Activated CD4-positive, alpha-beta T cell treated with anti-CD3 and anti-CD28 coated beads for 36 hours (primary cell): ENCODE measurements at regions of chrX and their contacts with region 1.

Region 1: DNA sequence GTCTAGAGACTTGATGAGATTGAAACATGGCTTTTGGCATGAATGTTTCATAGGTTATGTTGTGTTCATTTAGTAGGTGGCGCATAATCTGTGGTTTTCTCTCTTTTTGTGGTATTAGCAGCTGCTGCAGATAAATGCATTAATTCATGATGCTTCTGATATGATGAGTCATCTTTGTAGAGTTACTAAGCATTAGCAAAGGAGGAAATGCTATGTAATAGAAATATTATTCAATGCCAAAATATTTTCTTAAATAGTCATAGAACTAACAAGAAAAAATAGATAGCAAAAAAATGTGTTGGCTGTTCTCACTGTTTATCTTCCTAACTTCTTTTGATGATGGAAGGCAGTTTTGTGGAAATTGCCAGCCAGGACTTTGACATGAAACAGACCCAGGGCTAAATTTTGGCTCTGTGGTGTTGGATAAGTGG is 3.6 kb downstream of the ZXDB start:
- DNase-seq: no peak
- ATAC-seq: no peak
- H3K4me3 Mint-ChIP-seq: peak overlapping the region; percentile 69
- H3K27ac Mint-ChIP-seq: peak overlapping the region; percentile 80
- H3K4me1 Mint-ChIP-seq: peaks cover 34% of the 10 kb centered on the region
- H3K27me3 Mint-ChIP-seq: no peaks in the 10 kb centered on the region

Region 2: GRCh38 chrX:56530011-56530410 is 1065.4 kb before region 1 on chrX:
- CTCF ChIA-PET with region 1: no interaction called
- POLR2A ChIA-PET with region 1: no interaction called
- intact Hi-C with region 1: no loop called
- DNase-seq: no peak
- ATAC-seq: no peak
- H3K4me3 Mint-ChIP-seq: no peak overlapping the region
- H3K27ac Mint-ChIP-seq: no peak overlapping the region
- H3K4me1 Mint-ChIP-seq: no peaks in the 10 kb centered on the region
- H3K27me3 Mint-ChIP-seq: no peaks in the 10 kb centered on the region

Region 3: GRCh38 chrX:56995271-56995994 is 600.0 kb before region 1 on chrX and contains the start of gene SPIN3:
- CTCF ChIA-PET with region 1: no interaction called
- POLR2A ChIA-PET with region 1: no interaction called
- intact Hi-C with region 1: loop called (anchors 5 to 10 kb)
- DNase-seq: peak; percentile 80
- ATAC-seq: peak; percentile 95
- H3K4me3 Mint-ChIP-seq: peak within 1 kb of the TSS; percentile 84
- H3K27ac Mint-ChIP-seq: peak within 1 kb of the TSS; percentile 92
- H3K4me1 Mint-ChIP-seq: peaks cover 30% of the 10 kb centered on the region
- H3K27me3 Mint-ChIP-seq: no peaks in the 10 kb centered on the region
- total RNA-seq, gene SPIN3: 7.7 to 10.0 TPM

Region 4: DNA sequence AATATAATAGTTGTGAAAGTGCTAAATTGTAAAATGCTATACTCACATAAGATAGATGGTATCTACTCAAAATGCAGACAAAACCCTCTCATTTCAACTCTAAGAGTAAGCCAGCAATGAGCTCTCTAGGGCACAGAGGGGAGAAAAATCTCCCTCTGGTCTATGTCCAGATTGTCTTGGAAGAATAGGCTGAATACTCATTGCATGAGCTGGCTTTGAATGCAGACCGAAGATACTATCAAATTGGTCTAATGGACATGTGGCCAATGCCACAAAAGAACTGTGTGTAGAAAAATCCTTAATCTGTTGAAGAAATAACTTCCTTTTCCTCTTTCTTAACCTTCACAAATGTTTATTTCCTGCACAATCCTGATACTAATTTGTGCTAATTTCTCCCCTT is 311.4 kb after region 1 on chrX:
- CTCF ChIA-PET with region 1: no interaction called
- POLR2A ChIA-PET with region 1: no interaction called
- intact Hi-C with region 1: loop called in 1 of 2 experiments (anchors 1 kb)
- DNase-seq: no peak
- ATAC-seq: no peak
- H3K4me3 Mint-ChIP-seq: peak overlapping the region; percentile 21
- H3K27ac Mint-ChIP-seq: no peak overlapping the region
- H3K4me1 Mint-ChIP-seq: peaks cover 25% of the 10 kb centered on the region
- H3K27me3 Mint-ChIP-seq: no peaks in the 10 kb centered on the region

Region 5: DNA sequence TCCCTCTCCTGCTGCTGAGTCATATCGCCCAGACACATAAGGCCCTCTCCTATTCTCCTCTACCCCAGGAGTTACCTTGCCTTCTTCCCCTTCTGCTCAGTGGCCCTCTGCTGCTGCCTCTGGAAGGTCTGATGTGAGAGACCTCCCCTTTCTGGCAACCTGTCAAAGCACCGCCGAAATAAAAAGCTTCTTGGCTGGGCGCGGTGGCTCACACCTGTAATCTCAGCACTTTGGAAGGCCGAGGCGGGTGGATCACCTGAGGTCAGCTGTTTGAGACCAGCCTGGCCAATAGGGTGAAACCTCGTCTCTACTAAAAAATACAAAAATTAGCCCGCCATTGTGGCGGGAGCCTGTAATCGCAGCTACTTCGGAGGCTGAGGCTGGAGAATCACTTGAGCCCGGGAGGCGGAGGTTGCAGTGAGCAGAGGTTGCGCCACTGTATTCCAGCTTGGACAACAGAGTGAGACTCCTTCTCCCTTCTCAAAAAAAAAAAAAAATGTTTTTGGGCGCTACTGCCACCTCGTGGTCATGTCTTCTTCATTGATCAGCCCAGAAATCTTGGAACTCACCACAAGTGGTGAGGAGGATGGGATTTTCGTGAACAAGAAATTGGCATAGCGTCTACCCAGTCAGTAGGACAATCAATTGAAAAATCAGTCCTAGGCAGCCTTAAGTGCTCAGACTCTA is 323.5 kb after region 1 on chrX:
- CTCF ChIA-PET with region 1: no interaction called
- POLR2A ChIA-PET with region 1: no interaction called
- intact Hi-C with region 1: loop called in 1 of 2 experiments (anchors 2 kb)
- DNase-seq: peak; percentile 34
- ATAC-seq: peak; percentile 39
- H3K4me3 Mint-ChIP-seq: no peak overlapping the region
- H3K27ac Mint-ChIP-seq: no peak overlapping the region
- H3K4me1 Mint-ChIP-seq: no peaks in the 10 kb centered on the region
- H3K27me3 Mint-ChIP-seq: no peaks in the 10 kb centered on the region